ENCODE measurements at regions of chr17 and their contacts with region 1.

Region 1: DNA sequence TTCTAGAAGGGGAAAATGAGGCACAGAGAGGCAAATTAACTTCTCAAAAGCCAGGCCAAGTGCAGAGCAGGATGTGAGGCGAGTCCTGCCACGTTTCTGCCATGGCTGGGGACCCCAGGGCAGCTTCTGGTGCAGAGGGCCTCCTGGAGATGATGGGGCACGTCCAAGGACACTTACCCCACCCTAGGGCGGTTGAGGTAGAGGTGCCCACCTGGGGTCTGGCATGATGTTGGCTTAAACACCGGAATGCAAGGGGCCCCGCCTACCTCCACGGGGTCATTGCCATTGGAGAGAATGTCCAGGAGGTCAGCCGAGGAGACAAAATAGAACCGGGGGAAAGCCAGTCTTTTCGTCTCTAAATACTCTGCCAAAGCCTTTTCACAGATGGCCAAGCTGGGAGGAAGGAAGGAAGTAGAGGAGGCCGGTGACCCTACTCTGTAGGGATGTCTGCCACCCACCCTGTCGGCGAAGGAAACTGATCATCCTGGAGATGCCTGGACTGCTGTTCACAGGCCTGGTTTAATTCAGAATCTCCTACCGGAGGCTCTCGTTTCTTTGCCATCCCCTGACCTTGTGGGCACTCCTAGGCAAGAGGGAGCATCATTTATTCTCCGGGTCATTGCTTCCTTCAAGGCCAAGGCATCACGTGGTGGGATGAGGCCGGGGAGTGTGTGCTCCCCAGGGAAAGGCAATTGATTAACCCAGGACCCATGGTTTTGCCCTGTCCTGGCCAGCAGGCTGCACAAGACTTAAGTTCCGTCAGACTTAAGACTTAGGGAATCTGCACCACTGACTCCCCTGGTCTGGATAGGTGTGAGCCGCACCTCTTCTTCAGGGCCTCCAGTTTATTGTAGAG is 70.5 kb downstream of the DNAH17 start:
- DNase-seq: no peak
- H3K4me3 ChIP-seq: no peak overlapping the region
- H3K27ac ChIP-seq: no peak overlapping the region
- H3K4me1 ChIP-seq: no peaks in the 10 kb centered on the region
- H3K27me3 ChIP-seq: no peaks in the 10 kb centered on the region
- CTCF ChIP-seq: no peak
- EP300 ChIP-seq: no peak
- POLR2A ChIP-seq: no peak

Region 2: GRCh38 chr17:78523930-78524655 is 17.4 kb after region 1 on chr17:
- intact Hi-C with region 1: loop called in 1 of 4 experiments (anchors 1 kb)
- DNase-seq: no peak
- H3K4me3 ChIP-seq: no peak overlapping the region
- H3K27ac ChIP-seq: no peak overlapping the region
- H3K4me1 ChIP-seq: no peaks in the 10 kb centered on the region
- H3K27me3 ChIP-seq: no peaks in the 10 kb centered on the region
- CTCF ChIP-seq: no peak
- EP300 ChIP-seq: no peak
- POLR2A ChIP-seq: no peak